ENCODE measurements at regions of chr1 and their contacts with region 1.

Region 1: DNA sequence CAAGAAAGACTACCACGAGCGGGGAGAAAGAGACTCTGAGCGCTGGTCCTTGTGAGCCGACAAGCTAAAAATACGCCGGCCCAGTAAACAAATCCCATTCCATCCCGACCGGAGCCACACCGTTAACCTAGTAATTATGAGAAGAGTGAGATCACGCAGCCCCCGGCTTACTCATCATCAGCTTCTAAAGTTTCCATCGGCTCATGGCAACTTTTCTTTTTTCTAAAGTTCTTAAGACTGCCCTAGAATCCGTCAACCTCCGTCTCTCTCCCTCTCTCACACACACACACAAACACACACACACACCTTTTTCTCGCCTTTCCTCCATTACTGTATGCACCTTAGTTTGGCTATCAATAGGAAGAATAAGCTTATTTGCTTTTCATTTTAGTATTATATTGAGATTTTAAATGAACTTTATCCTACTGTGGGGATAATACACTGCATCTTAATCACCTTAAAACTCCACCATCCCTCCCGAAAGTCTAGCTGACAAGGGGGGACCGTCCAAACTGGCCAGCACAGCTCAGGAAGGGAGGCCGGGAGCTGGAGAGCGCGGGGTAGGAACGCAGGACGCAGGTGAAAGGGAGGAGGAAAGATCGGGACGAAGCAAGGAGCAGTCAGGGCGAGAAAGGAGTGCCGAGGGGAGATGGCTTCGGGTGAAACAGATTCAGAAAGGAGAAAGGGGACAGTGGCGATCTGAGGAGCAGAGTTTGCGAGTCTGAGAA is 697 bp downstream of the OTUD7B start:
- DNase-seq: peak; percentile 86
- H3K4me3 Mint-ChIP-seq: peak overlapping the region; percentile 92
- H3K27ac Mint-ChIP-seq: peak overlapping the region; percentile 96
- H3K4me1 Mint-ChIP-seq: peaks cover 43% of the 10 kb centered on the region
- H3K27me3 Mint-ChIP-seq: no peaks in the 10 kb centered on the region

Region 2: GRCh38 chr1:149927503-149928387 is 82.1 kb before region 1 on chr1 and contains the start of gene SF3B4:
- CTCF ChIA-PET with region 1: no interaction called
- intact Hi-C with region 1: loop called (anchors 2 kb)
- DNase-seq: peak; percentile 97
- H3K4me3 Mint-ChIP-seq: peak within 1 kb of the TSS; percentile 99
- H3K27ac Mint-ChIP-seq: peak within 1 kb of the TSS; percentile 95
- H3K4me1 Mint-ChIP-seq: peaks cover 45% of the 10 kb centered on the region
- H3K27me3 Mint-ChIP-seq: no peaks in the 10 kb centered on the region
- total RNA-seq, gene SF3B4: 47.3 to 48.5 TPM

Region 3: DNA sequence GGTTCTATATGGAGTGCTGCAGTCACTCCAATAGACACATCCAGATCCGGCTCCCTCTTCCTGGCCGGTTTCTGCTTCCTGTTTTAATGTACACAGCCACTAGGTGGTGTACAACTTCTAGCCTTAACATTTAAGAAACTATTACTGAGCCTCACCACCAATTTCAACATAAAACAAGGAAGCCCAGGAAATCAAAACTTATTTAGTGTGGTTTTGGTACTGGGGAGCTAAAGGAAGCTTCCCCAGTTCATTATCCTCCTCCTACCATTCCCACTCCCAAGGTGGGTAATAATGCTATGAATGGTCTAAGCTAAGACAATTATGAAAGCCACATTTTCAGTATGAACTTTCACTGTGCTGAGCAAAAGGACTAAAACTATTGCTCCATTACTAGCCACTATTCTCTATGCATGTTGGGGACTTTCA is 47.7 kb before region 1 on chr1:
- CTCF ChIA-PET with region 1: interaction called, 11 read pairs
- intact Hi-C with region 1: loop called (anchors 5 kb)
- DNase-seq: peak; percentile 63
- H3K4me3 Mint-ChIP-seq: no peak overlapping the region
- H3K27ac Mint-ChIP-seq: no peak overlapping the region
- H3K4me1 Mint-ChIP-seq: peaks cover 12% of the 10 kb centered on the region
- H3K27me3 Mint-ChIP-seq: no peaks in the 10 kb centered on the region

Region 4: DNA sequence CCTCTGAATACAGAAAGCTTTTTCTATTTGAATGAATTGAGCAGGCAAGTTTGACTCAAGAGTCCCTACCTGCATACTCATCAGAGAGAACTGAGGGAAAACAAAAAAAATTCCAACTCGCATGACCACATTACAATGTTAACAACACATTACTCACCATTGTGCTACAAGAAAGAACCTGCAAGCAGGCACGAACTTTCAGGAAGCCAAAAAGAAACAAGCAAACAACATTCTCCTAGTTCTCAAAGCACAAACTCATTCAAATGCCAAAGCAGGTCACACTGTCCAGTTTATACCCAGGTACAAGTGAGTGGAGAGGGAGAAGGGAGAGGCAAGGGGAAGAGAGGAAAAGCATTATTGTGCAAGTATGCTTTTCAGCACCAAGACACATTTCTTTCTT is 13.9 kb before region 1 on chr1:
- CTCF ChIA-PET with region 1: interaction called, 4 read pairs
- intact Hi-C with region 1: loop called (anchors 1 kb)
- DNase-seq: peak; percentile 37
- H3K4me3 Mint-ChIP-seq: no peak overlapping the region
- H3K27ac Mint-ChIP-seq: peak overlapping the region; percentile 61
- H3K4me1 Mint-ChIP-seq: peaks cover 56% of the 10 kb centered on the region
- H3K27me3 Mint-ChIP-seq: no peaks in the 10 kb centered on the region

Region 5: GRCh38 chr1:150067184-150068036 is 57.6 kb after region 1 on chr1 and contains the start of gene VPS45:
- CTCF ChIA-PET with region 1: no interaction called
- intact Hi-C with region 1: loop called (anchors 2 kb)
- DNase-seq: peak; percentile 90
- H3K4me3 Mint-ChIP-seq: peak within 1 kb of the TSS; percentile 94
- H3K27ac Mint-ChIP-seq: peak within 1 kb of the TSS; percentile 90
- H3K4me1 Mint-ChIP-seq: peaks cover 29% of the 10 kb centered on the region
- H3K27me3 Mint-ChIP-seq: no peaks in the 10 kb centered on the region
- total RNA-seq, gene VPS45: 21.2 to 23.6 TPM